Common myeloid progenitor, CD34-positive (primary cell): ENCODE measurements at regions of chr2 and their contacts with region 1.

Region 1: GRCh38 chr2:232300894-232301387 is 77.6 kb upstream of the ALPP start:
- DNase-seq: peak in 2 of 3 donors; percentile 45 to 53
- H3K4me3 ChIP-seq: no peak overlapping the region
- H3K27ac ChIP-seq: no peak overlapping the region
- H3K4me1 ChIP-seq: peaks cover 0 to 32% (median 15%) of the 10 kb centered on the region in 4 experiments
- H3K27me3 ChIP-seq: no peaks in the 10 kb centered on the region

Region 2: DNA sequence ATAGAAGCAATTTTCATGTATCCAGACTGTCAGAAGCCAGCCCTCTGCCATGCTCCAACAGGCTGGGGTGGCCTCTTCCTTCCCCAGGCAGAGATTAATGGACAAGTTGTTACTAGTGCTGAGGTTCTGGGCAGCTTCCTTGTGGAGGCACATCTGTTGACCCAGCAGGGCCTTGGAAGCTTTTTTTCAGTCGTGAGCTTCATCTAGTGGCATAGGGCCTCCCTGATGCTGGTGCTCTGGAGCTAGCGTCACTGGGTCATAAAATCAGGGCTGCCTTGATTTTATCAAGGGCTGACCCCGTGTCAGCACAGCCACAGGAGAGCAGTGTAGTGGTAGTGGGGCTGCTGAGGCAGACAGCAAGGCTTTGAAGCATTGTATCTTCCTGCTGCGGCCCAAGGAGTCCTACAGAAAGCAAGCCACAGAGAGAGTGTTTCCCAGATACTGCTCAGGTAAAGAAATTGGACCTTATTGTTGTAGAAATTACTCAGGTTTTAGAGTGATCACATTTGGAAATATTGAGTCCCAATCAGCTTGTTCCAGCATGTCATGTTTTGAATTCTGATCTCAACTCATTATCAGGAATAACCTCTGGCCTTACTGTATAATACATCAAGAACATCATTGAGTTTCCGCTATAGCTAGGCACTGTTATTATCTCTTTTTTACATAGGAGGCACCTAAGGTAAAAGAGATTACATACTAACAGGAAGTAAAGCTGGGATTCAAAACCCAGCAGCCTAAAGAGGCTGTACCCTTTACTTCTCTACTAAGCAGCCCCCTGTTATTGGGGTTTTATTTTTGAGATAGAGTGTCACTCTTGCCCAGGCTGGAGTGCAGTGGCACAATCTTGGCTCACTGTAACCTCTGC is 14.7 kb before region 1 on chr2:
- CTCF ChIA-PET with region 1: interaction called, 54 read pairs
- POLR2A ChIA-PET with region 1: interaction called, 3 read pairs
- DNase-seq: no peak
- H3K4me3 ChIP-seq: no peak overlapping the region
- H3K27ac ChIP-seq: no peak overlapping the region
- H3K4me1 ChIP-seq: peaks cover 5 to 21% (median 12%) of the 10 kb centered on the region in 4 experiments
- H3K27me3 ChIP-seq: no peaks in the 10 kb centered on the region

Region 3: GRCh38 chr2:232321156-232321816 is 20.3 kb after region 1 on chr2:
- CTCF ChIA-PET with region 1: interaction called, 25 read pairs
- POLR2A ChIA-PET with region 1: no interaction called
- DNase-seq: peak in 2 of 3 donors; percentile 33 to 42
- H3K4me3 ChIP-seq: no peak overlapping the region
- H3K27ac ChIP-seq: no peak overlapping the region
- H3K4me1 ChIP-seq: peaks cover 10 to 66% (median 50%) of the 10 kb centered on the region in 4 experiments
- H3K27me3 ChIP-seq: no peaks in the 10 kb centered on the region